Activated T-helper 1 cell treated with anti-CD3 and anti-CD28 coated beads, Interleukin-12 subunit alpha, Interleukin-12 subunit beta, Interleukin-2, Interleukin-4 antibody, amounts not matched to agents 30 ng/mL and 10 ng/mL and 1 ng/mL, durations not matched to agents 14 hours and 24 hours and 36 hours (primary cell): ENCODE measurements at regions of chr14 and their contacts with region 1.

Region 1: GRCh38 chr14:75487155-75487671 is 35.1 kb upstream of the BATF start:
- DNase-seq: peak; percentile 43
- H3K4me3 Mint-ChIP-seq: no peak overlapping the region
- H3K27ac Mint-ChIP-seq: peak overlapping the region; percentile 72
- H3K4me1 Mint-ChIP-seq: peaks cover 47% of the 10 kb centered on the region
- H3K27me3 Mint-ChIP-seq: no peaks in the 10 kb centered on the region

Region 2: DNA sequence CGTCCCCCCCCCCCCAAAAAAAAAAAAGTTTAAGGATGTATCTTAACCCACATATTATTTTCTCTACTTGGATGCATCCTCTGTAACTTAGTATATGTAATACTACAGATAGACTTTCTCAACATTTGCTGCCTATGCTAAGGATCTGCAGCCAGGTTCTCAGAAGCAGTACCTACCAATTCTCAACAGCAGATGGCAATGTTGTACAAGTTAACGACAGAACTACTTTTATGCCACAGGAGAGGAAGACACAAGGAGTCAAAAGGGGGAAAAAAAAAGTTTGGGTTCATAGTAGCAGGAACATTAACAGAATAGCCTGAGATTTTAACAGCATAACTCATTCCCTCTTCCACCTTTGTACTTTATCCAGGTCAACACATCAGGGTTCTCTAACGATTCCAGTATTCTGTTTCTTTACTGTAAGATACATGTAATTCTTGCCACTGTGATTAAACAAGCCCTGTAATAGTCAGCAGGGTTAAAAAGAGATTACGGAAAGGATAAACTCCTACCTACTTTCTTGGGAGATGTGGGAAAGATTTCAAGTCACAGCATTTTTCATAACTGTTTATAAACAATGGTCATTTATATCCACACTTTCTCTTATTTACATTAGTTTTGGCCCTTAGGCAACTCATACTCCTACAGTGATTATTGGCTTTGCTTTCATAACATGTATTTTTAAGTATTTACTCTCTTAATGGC is 354.7 kb before region 1 on chr14:
- intact Hi-C with region 1: loop called (anchors 2 kb)
- DNase-seq: peak; percentile 47
- H3K4me3 Mint-ChIP-seq: no peak overlapping the region
- H3K27ac Mint-ChIP-seq: peak overlapping the region; percentile 4
- H3K4me1 Mint-ChIP-seq: peaks cover 20% of the 10 kb centered on the region
- H3K27me3 Mint-ChIP-seq: no peaks in the 10 kb centered on the region

Region 3: GRCh38 chr14:75418849-75419768 is 68.1 kb before region 1 on chr14:
- intact Hi-C with region 1: loop called (anchors 1 kb)
- DNase-seq: peak; percentile 56
- H3K4me3 Mint-ChIP-seq: peak overlapping the region; percentile 56
- H3K27ac Mint-ChIP-seq: peak overlapping the region; percentile 68
- H3K4me1 Mint-ChIP-seq: peaks cover 31% of the 10 kb centered on the region
- H3K27me3 Mint-ChIP-seq: peaks cover under 1% of the 10 kb centered on the region

Region 4: DNA sequence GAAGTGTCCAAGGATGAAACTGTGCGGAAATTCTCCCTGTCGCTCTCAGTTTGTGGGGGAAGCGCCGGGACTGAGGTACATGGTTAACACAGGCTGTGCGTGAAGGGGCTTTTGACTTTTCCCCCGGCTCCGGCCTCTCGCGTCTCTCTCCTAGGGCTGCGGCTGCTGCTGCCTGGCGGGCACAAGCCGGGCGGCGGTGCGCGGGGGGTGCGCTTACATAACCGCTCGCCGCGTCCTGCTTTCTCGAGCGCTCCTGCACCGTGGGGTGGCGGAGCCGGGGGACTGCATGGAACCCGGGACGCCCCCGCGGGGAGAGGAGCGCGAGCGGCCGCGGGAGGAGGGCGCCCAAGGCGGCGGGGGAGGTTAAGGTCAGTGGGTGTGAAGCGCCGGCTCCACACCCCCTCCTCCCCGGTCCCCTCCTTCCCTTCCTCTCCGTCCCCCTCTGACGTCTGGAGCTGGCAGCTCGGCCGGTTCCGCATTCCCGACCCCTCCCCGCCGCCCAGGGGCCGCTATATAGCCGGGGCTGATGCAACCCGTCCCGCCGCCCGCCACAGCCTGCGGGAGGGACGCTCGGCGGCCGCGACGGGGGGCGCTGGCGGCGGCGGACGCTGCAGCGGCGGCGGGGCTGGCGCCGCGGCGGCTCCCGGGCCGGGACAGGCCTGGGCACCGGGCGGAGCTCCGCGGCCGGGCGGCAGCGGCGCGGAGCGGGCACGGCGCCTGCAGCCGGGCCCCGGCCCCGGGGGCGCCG is 59.6 kb before region 1 on chr14 and contains the start of gene JDP2:
- intact Hi-C with region 1: loop called (anchors 2 kb)
- DNase-seq: peak; percentile 33
- H3K4me3 Mint-ChIP-seq: peak within 1 kb of the TSS; percentile 81
- H3K27ac Mint-ChIP-seq: peak within 1 kb of the TSS; percentile 71
- H3K4me1 Mint-ChIP-seq: peaks cover 15% of the 10 kb centered on the region
- H3K27me3 Mint-ChIP-seq: peaks cover 17% of the 10 kb centered on the region
- total RNA-seq, gene JDP2: 1.8 and 2.0 TPM in 2 replicates

Region 5: DNA sequence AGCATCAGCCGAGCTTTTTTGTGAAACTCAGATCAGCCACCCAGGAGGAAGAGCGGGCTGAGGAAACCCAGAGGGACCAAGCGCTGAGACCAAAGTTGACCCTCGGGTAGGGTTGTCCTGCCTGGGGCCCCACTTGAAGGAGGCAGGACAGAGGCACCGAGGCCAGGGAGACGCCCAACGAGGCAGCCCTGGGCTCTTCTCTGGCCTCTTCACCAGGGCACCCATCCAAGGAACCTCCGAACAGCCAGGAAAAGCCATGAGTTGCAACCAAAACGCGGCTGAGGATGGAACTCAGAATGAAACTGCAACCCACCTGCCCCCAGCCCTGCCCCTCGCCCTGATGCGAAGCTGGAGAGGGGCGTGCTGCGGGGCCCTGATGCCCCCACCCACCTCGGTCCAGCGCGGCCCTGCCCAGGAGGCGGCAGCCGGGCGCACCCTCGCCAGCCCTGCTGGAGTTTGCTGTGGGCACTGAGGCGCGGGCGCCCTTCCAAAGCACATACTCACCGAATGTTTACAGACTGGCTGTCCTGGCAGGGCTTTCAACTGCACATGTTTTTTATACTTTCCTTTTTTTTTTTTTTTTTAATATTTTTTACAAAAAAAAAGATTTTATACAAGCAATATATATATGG is 17.5 kb before region 1 on chr14:
- intact Hi-C with region 1: loop called (anchors 1 kb)
- DNase-seq: no peak
- H3K4me3 Mint-ChIP-seq: no peak overlapping the region
- H3K27ac Mint-ChIP-seq: no peak overlapping the region
- H3K4me1 Mint-ChIP-seq: peaks cover 12% of the 10 kb centered on the region
- H3K27me3 Mint-ChIP-seq: no peaks in the 10 kb centered on the region

Region 6: DNA sequence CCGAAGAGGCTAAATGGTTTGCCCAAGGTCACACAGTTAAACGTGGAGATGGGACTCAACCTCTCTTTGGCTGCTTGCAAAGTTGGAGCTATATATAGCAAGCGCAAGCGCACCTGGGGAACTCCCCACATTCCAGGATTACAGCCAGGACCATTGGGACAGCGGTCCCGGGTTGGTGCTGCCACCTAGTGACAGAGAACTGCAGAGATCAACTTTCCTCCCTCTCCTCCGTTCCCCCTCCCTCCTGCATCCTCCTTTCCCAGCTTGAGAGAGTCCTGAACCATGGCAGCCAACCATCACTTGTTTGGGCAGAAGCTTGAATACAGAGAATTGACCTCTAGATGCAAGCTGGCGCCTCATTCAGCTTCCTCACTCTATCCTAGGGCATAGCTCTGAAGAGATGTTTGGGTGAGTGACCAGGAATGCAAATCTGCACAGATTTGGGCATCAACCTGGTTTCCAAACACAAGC is 73.8 kb after region 1 on chr14:
- intact Hi-C with region 1: loop called (anchors 2 kb)
- DNase-seq: no peak
- H3K4me3 Mint-ChIP-seq: peak overlapping the region; percentile 15
- H3K27ac Mint-ChIP-seq: peak overlapping the region; percentile 93
- H3K4me1 Mint-ChIP-seq: peaks cover 68% of the 10 kb centered on the region
- H3K27me3 Mint-ChIP-seq: no peaks in the 10 kb centered on the region

Region 7: DNA sequence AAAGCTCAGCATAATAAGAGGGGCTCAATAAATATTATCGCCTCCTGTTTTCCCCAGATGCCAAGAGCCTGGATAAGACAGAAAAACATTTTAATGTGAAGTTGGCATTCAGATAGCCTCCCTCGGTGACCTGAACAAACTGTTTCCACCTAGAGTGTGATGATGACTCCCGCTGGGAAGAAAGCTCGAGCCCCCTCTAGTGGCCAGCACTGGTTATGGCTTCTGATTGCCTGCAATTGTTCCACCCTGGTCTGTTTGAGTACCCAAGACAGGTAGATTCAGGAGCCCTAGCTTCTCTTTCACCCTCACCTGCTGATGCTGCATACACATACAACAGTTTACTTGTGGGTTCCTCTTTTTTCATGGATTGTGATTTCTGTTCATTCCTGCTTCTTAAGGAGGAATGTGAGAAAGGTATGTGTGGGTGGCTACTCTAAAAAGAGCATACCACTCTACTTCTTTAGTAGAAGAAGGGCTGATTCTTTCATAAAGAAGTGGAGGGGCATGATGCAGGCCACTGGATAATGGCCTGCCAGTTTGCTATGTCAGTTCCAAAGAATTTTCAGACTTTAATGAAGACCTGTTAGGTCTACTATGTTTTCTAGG is 167.0 kb after region 1 on chr14:
- intact Hi-C with region 1: loop called (anchors 1 kb)
- DNase-seq: peak; percentile 74
- H3K4me3 Mint-ChIP-seq: no peak overlapping the region
- H3K27ac Mint-ChIP-seq: no peak overlapping the region
- H3K4me1 Mint-ChIP-seq: peaks cover 20% of the 10 kb centered on the region
- H3K27me3 Mint-ChIP-seq: no peaks in the 10 kb centered on the region